Esophagus muscularis mucosa (tissue), 4 donors: ENCODE measurements at regions of chr14 and their contacts with region 1.

Region 1: GRCh38 chr14:36553656-36554260 is 28.7 kb downstream of the NKX2-8 start:
- DNase-seq: no peak
- H3K4me3 ChIP-seq: no peak overlapping the region
- H3K27ac ChIP-seq: no peak overlapping the region
- H3K4me1 ChIP-seq: no peaks in the 10 kb centered on the region
- H3K27me3 ChIP-seq: peaks cover 0 to 4% (median 1%) of the 10 kb centered on the region in 4 donors
- CTCF ChIP-seq: peak; percentile 38 to 65 (median 59)
- EP300 ChIP-seq: no peak
- POLR2A ChIP-seq: no peak

Region 2: GRCh38 chr14:36604757-36605505 is 51.2 kb after region 1 on chr14:
- intact Hi-C with region 1: loop called (anchors 5 kb)
- DNase-seq: peak; percentile 42
- H3K4me3 ChIP-seq: no peak overlapping the region
- H3K27ac ChIP-seq: no peak overlapping the region
- H3K4me1 ChIP-seq: no peaks in the 10 kb centered on the region
- H3K27me3 ChIP-seq: peaks cover 0 to 39% (median 3%) of the 10 kb centered on the region in 4 donors
- CTCF ChIP-seq: peak; percentile 58 to 79 (median 61)
- EP300 ChIP-seq: no peak
- POLR2A ChIP-seq: no peak

Region 3: GRCh38 chr14:37150414-37150813 is 596.7 kb after region 1 on chr14:
- intact Hi-C with region 1: loop called (anchors 10 kb)
- DNase-seq: no peak
- H3K4me3 ChIP-seq: no peak overlapping the region
- H3K27ac ChIP-seq: no peak overlapping the region
- H3K4me1 ChIP-seq: peaks cover 0 to 6% (median 0%) of the 10 kb centered on the region in 4 donors
- H3K27me3 ChIP-seq: no peaks in the 10 kb centered on the region
- CTCF ChIP-seq: peak; percentile 59 to 69 (median 68)
- EP300 ChIP-seq: no peak
- POLR2A ChIP-seq: no peak